Naive thymus-derived CD4-positive, alpha-beta T cell (primary cell): ENCODE measurements at regions of chr21 and their contacts with region 1.

Region 1: GRCh38 chr21:43810505-43811261 is 21.3 kb downstream of the RRP1 start:
- DNase-seq: peak; percentile 70 to 96 (median 84)
- ATAC-seq: peak; percentile 94
- H3K4me3 ChIP-seq: no peak overlapping the region
- H3K4me3 Mint-ChIP-seq: peak overlapping the region in 5 of 10 donors; percentile 13 to 39 (median 25)
- H3K27ac ChIP-seq: no peak overlapping the region
- H3K27ac Mint-ChIP-seq: peak overlapping the region in 4 of 9 donors; percentile 31 to 58 (median 49)
- H3K4me1 ChIP-seq: no peaks in the 10 kb centered on the region
- H3K4me1 Mint-ChIP-seq: peaks cover 4 to 21% (median 12%) of the 10 kb centered on the region in 7 donors
- H3K27me3 ChIP-seq: no peaks in the 10 kb centered on the region
- H3K27me3 Mint-ChIP-seq: no peaks in the 10 kb centered on the region

Region 2: GRCh38 chr21:43854773-43855633 is 44.3 kb after region 1 on chr21:
- CTCF ChIA-PET with region 1: no interaction called
- POLR2A ChIA-PET with region 1: no interaction called
- intact Hi-C with region 1: loop called in 1 of 2 experiments (anchors 2 kb)
- DNase-seq: peak in 1 of 9 donors; percentile 61
- ATAC-seq: peak; percentile 87
- H3K4me3 ChIP-seq: no peak overlapping the region
- H3K4me3 Mint-ChIP-seq: peak overlapping the region in 1 of 10 donors; percentile 81
- H3K27ac ChIP-seq: no peak overlapping the region
- H3K27ac Mint-ChIP-seq: peak overlapping the region in 1 of 9 donors; percentile 93
- H3K4me1 ChIP-seq: no peaks in the 10 kb centered on the region
- H3K4me1 Mint-ChIP-seq: peaks cover 0 to 47% (median under 1%) of the 10 kb centered on the region in 7 donors
- H3K27me3 ChIP-seq: no peaks in the 10 kb centered on the region
- H3K27me3 Mint-ChIP-seq: peaks cover 0 to 10% (median 5%) of the 10 kb centered on the region in 5 donors

Region 3: GRCh38 chr21:43916691-43917514 is 106.2 kb after region 1 on chr21:
- CTCF ChIA-PET with region 1: interaction called, 8 read pairs
- POLR2A ChIA-PET with region 1: no interaction called
- intact Hi-C with region 1: loop called (anchors 1 to 5 kb)
- DNase-seq: peak; percentile 56 to 83 (median 80)
- ATAC-seq: peak; percentile 93
- H3K4me3 ChIP-seq: peak overlapping the region; percentile 71
- H3K4me3 Mint-ChIP-seq: peak overlapping the region; percentile 83 to 95 (median 89)
- H3K27ac ChIP-seq: peak overlapping the region; percentile 84
- H3K27ac Mint-ChIP-seq: peak overlapping the region; percentile 86 to 96 (median 94)
- H3K4me1 ChIP-seq: peaks cover 25 to 33% of the 10 kb centered on the region in 2 donors
- H3K4me1 Mint-ChIP-seq: peaks cover 47 to 74% (median 61%) of the 10 kb centered on the region in 7 donors
- H3K27me3 ChIP-seq: no peaks in the 10 kb centered on the region
- H3K27me3 Mint-ChIP-seq: peaks cover 0 to 4% (median 0%) of the 10 kb centered on the region in 5 donors

Region 4: GRCh38 chr21:43938751-43939442 is 128.2 kb after region 1 on chr21:
- CTCF ChIA-PET with region 1: interaction called, 7 read pairs
- POLR2A ChIA-PET with region 1: no interaction called
- intact Hi-C with region 1: loop called (anchors 1 kb)
- DNase-seq: peak; percentile 81 to 92 (median 90)
- ATAC-seq: peak; percentile 100
- H3K4me3 ChIP-seq: peak overlapping the region; percentile 63
- H3K4me3 Mint-ChIP-seq: peak overlapping the region; percentile 79 to 95 (median 88)
- H3K27ac ChIP-seq: peak overlapping the region; percentile 64
- H3K27ac Mint-ChIP-seq: peak overlapping the region; percentile 39 to 96 (median 85)
- H3K4me1 ChIP-seq: peaks cover 0 to 9% of the 10 kb centered on the region in 2 donors
- H3K4me1 Mint-ChIP-seq: peaks cover 17 to 27% (median 21%) of the 10 kb centered on the region in 7 donors
- H3K27me3 ChIP-seq: no peaks in the 10 kb centered on the region
- H3K27me3 Mint-ChIP-seq: no peaks in the 10 kb centered on the region

Region 5: GRCh38 chr21:43975495-43975993 is 164.9 kb after region 1 on chr21:
- CTCF ChIA-PET with region 1: no interaction called
- POLR2A ChIA-PET with region 1: interaction called, 3 read pairs
- intact Hi-C with region 1: loop called in 1 of 2 experiments (anchors 1 kb)
- DNase-seq: peak; percentile 70 to 87 (median 81)
- ATAC-seq: peak; percentile 95
- H3K4me3 ChIP-seq: no peak overlapping the region
- H3K4me3 Mint-ChIP-seq: no peak overlapping the region
- H3K27ac ChIP-seq: no peak overlapping the region
- H3K27ac Mint-ChIP-seq: peak overlapping the region in 6 of 9 donors; percentile 0 to 94 (median 58)
- H3K4me1 ChIP-seq: peaks cover 0 to 4% of the 10 kb centered on the region in 2 donors
- H3K4me1 Mint-ChIP-seq: peaks cover 11 to 17% (median 15%) of the 10 kb centered on the region in 7 donors
- H3K27me3 ChIP-seq: no peaks in the 10 kb centered on the region
- H3K27me3 Mint-ChIP-seq: no peaks in the 10 kb centered on the region